ENCODE measurements at regions of chr12 and their contacts with region 1.

Region 1: DNA sequence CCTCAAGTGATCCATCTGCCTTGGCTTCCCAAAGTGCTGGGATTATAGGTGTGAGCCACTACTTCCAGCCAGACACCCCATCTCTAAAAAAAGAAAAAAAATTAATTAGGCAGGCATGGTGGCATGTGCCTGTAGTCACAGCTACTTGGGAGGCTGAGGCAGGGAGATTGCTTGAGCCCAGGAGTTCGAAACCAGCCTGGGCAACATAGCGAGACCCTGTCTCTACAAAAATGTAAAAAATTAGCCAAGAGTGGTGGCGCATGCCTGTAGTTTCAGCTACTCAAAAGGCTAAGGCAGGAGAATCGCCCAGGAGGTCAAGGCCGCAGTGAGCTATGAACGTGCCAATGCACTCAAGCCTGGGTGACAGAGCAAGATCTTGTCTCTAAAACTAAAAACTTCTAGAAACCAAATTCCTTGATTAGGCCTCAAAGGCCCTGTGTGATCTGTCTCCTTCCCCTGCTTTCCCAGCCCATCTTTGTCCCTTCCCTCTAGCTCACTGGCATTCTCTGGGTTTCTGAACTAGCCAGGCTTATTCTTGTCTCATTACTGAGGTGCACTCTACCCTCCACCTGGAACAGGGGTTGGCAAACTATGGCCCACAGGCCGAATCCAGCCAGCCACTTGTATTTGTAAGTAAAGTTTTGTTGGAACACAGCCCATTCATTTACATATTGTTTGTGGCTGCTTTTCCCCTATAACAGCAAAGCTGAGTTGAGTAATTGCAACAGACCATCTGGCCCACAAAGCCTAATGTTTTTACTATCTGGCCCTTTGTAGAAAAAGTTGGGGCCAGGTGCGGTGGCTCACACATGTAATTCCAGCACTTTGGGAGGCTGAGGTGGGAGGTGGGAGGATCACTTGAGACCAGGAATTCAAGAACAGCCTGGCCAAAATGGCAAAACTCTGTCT is 17.2 kb upstream of the TPCN1 start:
- DNase-seq: no peak
- H3K4me3 ChIP-seq: no peak overlapping the region
- H3K4me3 Mint-ChIP-seq: no peak overlapping the region
- H3K27ac Mint-ChIP-seq: no peak overlapping the region
- H3K4me1 ChIP-seq: no peaks in the 10 kb centered on the region
- H3K4me1 Mint-ChIP-seq: no peaks in the 10 kb centered on the region
- H3K27me3 ChIP-seq: no peaks in the 10 kb centered on the region
- H3K27me3 Mint-ChIP-seq: no peaks in the 10 kb centered on the region
- CTCF ChIP-seq: no peak

Region 2: DNA sequence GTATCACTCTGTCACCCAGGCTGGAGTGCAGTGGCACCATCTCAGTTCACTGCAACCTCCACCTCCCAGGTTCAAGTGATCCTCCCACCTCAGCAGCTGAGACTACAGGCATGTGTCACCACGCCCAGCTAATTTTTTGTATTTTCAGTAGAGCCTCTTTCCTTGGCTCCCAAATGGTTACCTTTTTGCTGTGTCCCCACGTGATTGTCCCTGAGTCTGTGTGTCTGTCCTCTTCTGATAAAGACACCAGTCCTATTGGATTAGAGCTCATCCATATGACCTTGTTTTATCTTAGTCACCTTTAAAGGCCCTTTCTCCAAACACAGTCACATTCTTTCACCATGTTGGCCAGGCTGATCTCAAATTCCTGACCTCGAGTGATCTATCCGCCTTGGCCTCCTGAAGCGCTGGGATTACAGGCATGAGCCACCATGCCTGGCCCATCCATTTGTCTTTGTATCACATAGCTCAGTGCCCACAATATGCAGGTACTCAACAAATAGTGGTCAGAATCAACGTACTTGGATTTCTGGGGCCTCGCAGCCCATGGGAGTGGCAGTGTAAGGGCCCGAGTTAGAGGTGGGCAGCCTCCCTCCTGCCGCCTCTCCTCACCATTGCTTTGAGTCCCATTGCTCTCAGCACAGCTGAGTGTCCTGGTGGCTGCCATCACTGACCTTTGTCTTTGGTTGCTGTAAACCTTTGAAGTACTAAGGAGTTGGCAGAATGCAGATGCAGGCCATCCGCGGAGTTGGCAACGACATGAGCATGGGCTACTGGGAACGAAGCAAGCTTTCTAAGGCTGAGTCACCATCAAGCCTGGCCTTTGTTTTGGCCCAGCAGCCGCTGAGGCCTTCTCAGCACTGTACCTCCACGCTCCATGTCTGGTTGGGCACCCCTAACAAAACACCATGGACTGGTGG is 26.5 kb after region 1 on chr12:
- CTCF ChIA-PET with region 1: no interaction called
- POLR2A ChIA-PET with region 1: no interaction called
- intact Hi-C with region 1: no loop called
- DNase-seq: peak; percentile 79 to 85
- H3K4me3 ChIP-seq: no peak overlapping the region
- H3K4me3 Mint-ChIP-seq: peak overlapping the region; percentile 47
- H3K27ac Mint-ChIP-seq: peak overlapping the region; percentile 95
- H3K4me1 ChIP-seq: peaks cover 64% of the 10 kb centered on the region
- H3K4me1 Mint-ChIP-seq: peaks cover 38% of the 10 kb centered on the region
- H3K27me3 ChIP-seq: no peaks in the 10 kb centered on the region
- H3K27me3 Mint-ChIP-seq: no peaks in the 10 kb centered on the region
- CTCF ChIP-seq: no peak

Region 3: DNA sequence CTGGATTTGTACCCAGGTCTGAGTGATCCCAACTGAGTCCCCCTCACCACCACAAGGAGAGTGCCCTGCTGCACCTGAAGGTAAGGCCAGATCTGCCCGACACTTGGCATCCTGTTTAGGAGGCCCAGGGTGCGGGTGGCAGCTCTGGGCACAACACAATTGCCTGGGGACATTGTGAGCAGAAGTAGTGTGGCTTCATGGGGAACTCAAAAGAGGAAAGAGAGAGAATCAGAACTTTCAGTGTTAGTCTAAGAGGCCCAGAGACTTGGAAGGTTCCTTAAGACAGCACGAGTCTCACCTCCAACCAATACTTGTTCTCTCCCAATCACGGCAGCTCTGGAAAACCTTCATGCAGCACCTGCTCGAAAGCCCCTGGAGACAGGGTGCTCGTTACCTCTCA is 137.4 kb after region 1 on chr12:
- CTCF ChIA-PET with region 1: no interaction called
- POLR2A ChIA-PET with region 1: interaction called, 13 read pairs
- intact Hi-C with region 1: no loop called
- DNase-seq: no peak
- H3K4me3 ChIP-seq: no peak overlapping the region
- H3K4me3 Mint-ChIP-seq: no peak overlapping the region
- H3K27ac Mint-ChIP-seq: no peak overlapping the region
- H3K4me1 ChIP-seq: no peaks in the 10 kb centered on the region
- H3K4me1 Mint-ChIP-seq: no peaks in the 10 kb centered on the region
- H3K27me3 ChIP-seq: no peaks in the 10 kb centered on the region
- H3K27me3 Mint-ChIP-seq: no peaks in the 10 kb centered on the region
- CTCF ChIP-seq: no peak

Region 4: GRCh38 chr12:113366827-113367226 is 162.7 kb after region 1 on chr12:
- CTCF ChIA-PET with region 1: no interaction called
- POLR2A ChIA-PET with region 1: no interaction called
- intact Hi-C with region 1: no loop called
- DNase-seq: no peak
- H3K4me3 ChIP-seq: no peak overlapping the region
- H3K4me3 Mint-ChIP-seq: no peak overlapping the region
- H3K27ac Mint-ChIP-seq: no peak overlapping the region
- H3K4me1 ChIP-seq: no peaks in the 10 kb centered on the region
- H3K4me1 Mint-ChIP-seq: no peaks in the 10 kb centered on the region
- H3K27me3 ChIP-seq: no peaks in the 10 kb centered on the region
- H3K27me3 Mint-ChIP-seq: no peaks in the 10 kb centered on the region
- CTCF ChIP-seq: no peak

Measured in Caco-2 (cell line).